IMR-90 (cell line): ENCODE measurements at regions of chr3 and their contacts with region 1.

Region 1: DNA sequence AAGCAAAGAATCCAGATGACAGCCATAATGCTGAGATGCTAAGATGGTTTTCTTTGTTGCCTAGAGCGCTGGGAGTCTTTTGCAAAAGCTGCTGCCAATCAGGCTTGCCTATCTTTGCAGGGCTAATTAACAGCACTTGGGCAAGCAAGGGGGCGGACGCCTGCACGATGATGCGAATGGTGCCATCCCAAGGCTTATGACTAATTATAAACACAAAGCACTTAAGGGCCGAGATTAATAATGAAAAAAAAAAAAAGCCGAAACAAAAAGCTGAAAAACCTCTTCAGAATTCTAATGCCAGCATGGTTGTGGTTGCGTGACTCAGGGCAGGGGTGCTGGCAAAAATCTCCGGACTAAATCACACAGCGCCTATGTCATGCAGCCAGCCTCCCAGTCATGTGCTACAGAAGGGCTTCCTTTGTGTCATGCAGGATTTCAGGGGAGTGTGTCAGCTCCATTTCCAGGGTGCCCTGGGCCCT is 184.9 kb upstream of the ANKRD28 start:
- DNase-seq: peak; percentile 96
- ATAC-seq: peak; percentile 92
- H3K4me3 ChIP-seq: peak overlapping the region; percentile 7; the same call in 1 of the 2 replicates
- H3K27ac ChIP-seq: peak overlapping the region; percentile 94
- H3K4me1 ChIP-seq: peaks cover 7% of the 10 kb centered on the region
- H3K27me3 ChIP-seq: no peaks in the 10 kb centered on the region
- CTCF ChIP-seq: no peak
- POLR2A ChIP-seq: no peak
- RAD21 ChIP-seq: no peak; the same call in 1 of the 2 replicates

Region 2: GRCh38 chr3:15933439-15934139 is 49.1 kb before region 1 on chr3:
- CTCF ChIA-PET with region 1: interaction called, 3 read pairs
- POLR2A ChIA-PET with region 1: no interaction called
- dilution Hi-C with region 1: no loop called
- in situ Hi-C with region 1: no loop called
- intact Hi-C with region 1: loop called (anchors 5 kb)
- DNase-seq: peak; percentile 82
- ATAC-seq: peak; percentile 58
- H3K4me3 ChIP-seq: no peak overlapping the region
- H3K27ac ChIP-seq: no peak overlapping the region; the same call in 1 of the 2 replicates
- H3K4me1 ChIP-seq: peaks cover 9% of the 10 kb centered on the region; the same call in 1 of the 2 replicates
- H3K27me3 ChIP-seq: no peaks in the 10 kb centered on the region
- CTCF ChIP-seq: no peak
- POLR2A ChIP-seq: no peak
- RAD21 ChIP-seq: no peak

Region 3: GRCh38 chr3:16048435-16049318 is 66.0 kb after region 1 on chr3:
- CTCF ChIA-PET with region 1: no interaction called
- POLR2A ChIA-PET with region 1: no interaction called
- dilution Hi-C with region 1: no loop called
- in situ Hi-C with region 1: no loop called
- intact Hi-C with region 1: loop called (anchors 2 kb)
- DNase-seq: peak; percentile 81
- ATAC-seq: peak; percentile 94
- H3K4me3 ChIP-seq: no peak overlapping the region; the same call in 1 of the 2 replicates
- H3K27ac ChIP-seq: peak overlapping the region; percentile 28; the same call in 1 of the 2 replicates
- H3K4me1 ChIP-seq: peaks cover 12% of the 10 kb centered on the region
- H3K27me3 ChIP-seq: no peaks in the 10 kb centered on the region
- CTCF ChIP-seq: peak; percentile 93
- POLR2A ChIP-seq: peak; percentile 67
- RAD21 ChIP-seq: peak; percentile 100

Region 4: GRCh38 chr3:16247276-16248061 is 264.8 kb after region 1 on chr3:
- CTCF ChIA-PET with region 1: no interaction called
- POLR2A ChIA-PET with region 1: interaction called, 5 read pairs
- dilution Hi-C with region 1: no loop called
- in situ Hi-C with region 1: no loop called
- intact Hi-C with region 1: loop called (anchors 2 kb)
- DNase-seq: peak; percentile 84
- ATAC-seq: peak; percentile 88
- H3K4me3 ChIP-seq: no peak overlapping the region
- H3K27ac ChIP-seq: no peak overlapping the region
- H3K4me1 ChIP-seq: peaks cover 13% of the 10 kb centered on the region
- H3K27me3 ChIP-seq: no peaks in the 10 kb centered on the region
- CTCF ChIP-seq: peak; percentile 96
- POLR2A ChIP-seq: peak; percentile 50
- RAD21 ChIP-seq: peak; percentile 99